ENCODE measurements at regions of chr2 and their contacts with region 1.

Region 1: DNA sequence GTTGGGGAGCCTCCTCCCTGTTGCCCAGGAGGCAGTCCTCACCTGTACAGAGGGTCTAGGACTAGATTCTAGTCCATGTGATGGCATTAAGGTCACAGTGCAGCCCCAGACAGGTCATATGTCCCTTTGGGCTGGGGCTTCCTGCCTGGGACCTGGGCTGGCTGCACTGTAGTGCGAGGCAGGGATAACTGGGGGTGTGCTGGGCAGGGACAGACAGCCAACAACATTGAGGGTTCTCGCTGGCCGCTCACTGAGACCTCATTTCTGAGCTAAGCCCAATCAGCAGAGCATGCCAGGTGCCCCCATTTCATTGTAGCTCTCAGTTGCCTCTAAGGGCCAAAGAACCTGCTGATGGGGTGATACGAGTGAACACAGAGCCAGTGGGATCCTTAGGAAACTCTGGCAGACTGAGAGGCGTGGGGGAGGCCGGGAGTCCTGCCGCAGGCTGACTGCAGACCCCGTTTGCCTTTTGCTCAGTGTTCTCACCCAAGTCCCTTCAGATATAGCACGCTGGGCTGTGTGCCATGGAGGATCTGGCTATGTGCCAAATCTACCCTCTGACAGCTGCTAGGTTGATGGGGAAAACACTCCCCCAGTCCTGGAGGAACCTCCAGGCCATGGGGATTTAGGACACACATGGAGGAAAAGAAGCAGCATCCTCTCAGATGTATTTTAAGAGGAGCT is 51.9 kb downstream of the DYSF start:
- DNase-seq: peak; percentile 57
- ATAC-seq: peak; percentile 23

Region 2: GRCh38 chr2:71299507-71299906 is 205.7 kb before region 1 on chr2:
- intact Hi-C with region 1: loop called (anchors 10 kb)
- DNase-seq: no peak
- ATAC-seq: no peak

Region 3: DNA sequence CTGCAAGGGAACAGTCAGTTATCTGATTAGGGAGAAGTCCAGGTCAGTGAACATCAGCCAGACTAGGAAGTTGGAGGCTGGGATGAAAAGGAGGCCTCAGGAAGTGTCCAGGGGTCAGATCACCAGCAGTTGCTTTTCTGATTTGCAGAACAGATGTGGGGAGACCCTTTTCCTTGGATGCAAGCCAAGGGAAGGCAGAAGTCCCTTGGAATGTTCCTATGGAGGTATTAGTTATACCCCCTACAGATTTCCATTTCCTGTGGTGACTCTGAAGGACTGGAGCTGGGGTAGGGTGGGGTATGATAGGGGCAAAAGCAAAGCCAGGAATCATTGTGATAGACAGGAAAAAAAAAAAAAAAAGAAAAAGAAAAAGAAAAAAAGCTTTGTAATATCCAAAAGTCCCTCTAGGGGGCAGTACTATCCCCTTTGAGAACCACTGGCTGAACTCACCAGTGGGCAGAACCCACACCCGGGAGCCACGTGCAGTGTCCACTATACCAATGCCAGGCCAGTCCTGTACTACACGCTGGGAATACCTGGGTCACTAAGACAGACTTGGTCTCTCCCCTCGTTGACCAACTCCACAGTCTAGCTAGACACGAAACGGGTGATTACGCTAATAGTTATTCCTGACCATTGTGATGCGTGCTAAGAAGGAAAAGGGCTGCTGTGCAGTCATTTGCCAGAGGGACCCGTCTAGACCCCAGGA is 44.5 kb before region 1 on chr2:
- intact Hi-C with region 1: loop called (anchors 5 kb)
- DNase-seq: peak; percentile 46
- ATAC-seq: peak; percentile 14